CD4-positive, alpha-beta T cell (primary cell): ENCODE measurements at regions of chr15 and their contacts with region 1.

Region 1: DNA sequence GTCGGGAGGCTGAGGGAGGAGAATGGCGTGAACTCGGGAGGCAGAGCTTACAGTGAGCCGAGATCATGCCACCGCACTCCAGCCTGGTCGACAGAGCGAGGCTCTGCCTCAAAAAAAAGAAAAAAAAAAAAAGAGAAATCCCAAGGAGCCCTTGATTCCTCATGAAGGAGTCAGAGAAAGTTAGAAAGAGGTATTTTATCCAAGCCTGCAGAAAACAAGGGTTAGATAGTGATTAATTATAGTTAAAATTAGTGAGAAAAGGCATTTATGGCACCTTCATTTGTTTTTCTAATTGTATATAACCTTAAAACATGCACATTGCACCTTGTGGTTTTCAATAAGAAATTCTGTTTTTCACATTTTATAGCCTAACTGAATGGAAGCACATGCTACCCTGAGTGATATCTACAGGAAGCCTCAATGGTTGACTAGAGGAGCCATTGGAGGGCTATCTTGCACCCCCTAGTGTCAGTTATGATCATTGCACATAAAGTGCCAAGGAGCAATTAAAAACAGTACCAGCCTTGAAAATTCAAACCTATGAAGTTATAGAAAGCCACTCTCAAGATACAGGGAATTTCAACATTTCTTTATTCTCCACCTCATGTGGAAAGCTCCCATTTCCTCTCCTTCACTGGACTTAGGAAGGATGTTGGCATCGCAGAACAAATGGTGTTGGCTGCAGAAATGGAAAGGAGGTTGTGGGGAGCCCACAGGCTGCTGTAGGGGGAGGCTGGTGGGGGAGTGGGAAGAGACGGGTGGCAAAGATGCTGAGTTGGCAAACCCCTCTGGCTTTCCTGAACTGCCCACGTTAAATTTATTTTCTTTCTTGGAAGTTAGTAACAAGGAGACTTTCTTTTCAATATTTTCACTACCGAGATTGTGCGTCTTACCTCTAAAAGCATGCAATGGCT is 48.5 kb downstream of the ITGA11 start:
- DNase-seq: peak in 11 of 14 experiments; percentile 6 to 73 (median 27)
- ATAC-seq: peak; percentile 83
- H3K4me3 ChIP-seq: no peak overlapping the region
- H3K4me3 Mint-ChIP-seq: no peak overlapping the region
- H3K27ac ChIP-seq: no peak overlapping the region
- H3K27ac Mint-ChIP-seq: no peak overlapping the region
- H3K4me1 ChIP-seq: peaks cover 13% of the 10 kb centered on the region
- H3K4me1 Mint-ChIP-seq: peaks cover 21% of the 10 kb centered on the region
- H3K27me3 ChIP-seq: peaks cover 0 to 9% of the 10 kb centered on the region in 2 experiments
- H3K27me3 Mint-ChIP-seq: peaks cover 3% of the 10 kb centered on the region
- CTCF ChIP-seq: peak; percentile 70

Region 2: GRCh38 chr15:68252925-68253534 is 130.4 kb before region 1 on chr15:
- CTCF ChIA-PET with region 1: no interaction called
- POLR2A ChIA-PET with region 1: no interaction called
- intact Hi-C with region 1: loop called (anchors 1 to 2 kb)
- DNase-seq: peak in 6 of 14 experiments; percentile 16 to 76 (median 60)
- ATAC-seq: peak; percentile 75
- H3K4me3 ChIP-seq: no peak overlapping the region
- H3K4me3 Mint-ChIP-seq: peak overlapping the region; percentile 44
- H3K27ac ChIP-seq: no peak overlapping the region
- H3K27ac Mint-ChIP-seq: no peak overlapping the region
- H3K4me1 ChIP-seq: peaks cover 9% of the 10 kb centered on the region
- H3K4me1 Mint-ChIP-seq: peaks cover 7% of the 10 kb centered on the region
- H3K27me3 ChIP-seq: no peaks in the 10 kb centered on the region
- H3K27me3 Mint-ChIP-seq: no peaks in the 10 kb centered on the region
- CTCF ChIP-seq: peak; percentile 89

Region 3: DNA sequence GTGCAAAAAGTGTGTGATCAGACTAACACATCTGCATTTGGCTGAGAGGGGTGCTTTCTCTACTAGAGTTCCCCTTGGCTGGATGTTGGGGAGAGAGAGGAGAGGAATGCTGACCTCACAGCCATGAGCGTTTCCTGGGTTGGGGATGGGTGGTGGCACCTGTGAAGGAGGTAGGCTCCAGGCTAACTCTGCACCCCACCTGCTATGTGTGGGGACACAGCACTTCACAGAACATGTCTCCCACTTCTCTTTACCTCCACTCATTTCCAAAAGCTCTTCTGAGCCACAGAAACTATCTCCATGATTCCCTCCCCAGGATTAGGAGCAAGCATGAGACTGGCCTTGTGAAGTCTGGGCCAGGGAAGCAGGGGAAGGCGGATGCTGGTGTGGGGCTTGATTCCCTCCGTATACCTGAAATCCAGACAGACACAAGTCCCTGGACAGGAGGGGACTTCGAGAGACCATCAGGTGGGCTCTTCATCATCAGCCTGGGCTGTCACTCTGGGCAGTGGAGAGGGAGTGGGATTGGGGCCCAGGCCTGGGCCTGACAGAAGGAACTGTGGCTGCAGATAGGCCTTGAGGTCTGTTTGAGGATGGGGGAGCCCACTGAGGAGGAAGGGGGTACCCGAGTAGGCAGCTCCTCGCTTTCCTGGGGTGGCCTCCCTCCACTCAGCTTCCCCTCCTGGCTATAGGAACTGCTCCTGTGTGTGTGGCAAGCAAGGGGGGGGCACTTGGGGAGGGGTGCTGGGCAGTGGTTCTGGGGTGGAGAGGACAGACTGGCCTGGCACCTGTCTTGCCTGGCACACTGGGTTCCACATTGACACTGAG is 65.2 kb before region 1 on chr15:
- CTCF ChIA-PET with region 1: no interaction called
- POLR2A ChIA-PET with region 1: no interaction called
- intact Hi-C with region 1: no loop called
- DNase-seq: no peak
- ATAC-seq: no peak
- H3K4me3 ChIP-seq: no peak overlapping the region
- H3K4me3 Mint-ChIP-seq: no peak overlapping the region
- H3K27ac ChIP-seq: no peak overlapping the region
- H3K27ac Mint-ChIP-seq: no peak overlapping the region
- H3K4me1 ChIP-seq: no peaks in the 10 kb centered on the region
- H3K4me1 Mint-ChIP-seq: peaks cover 19% of the 10 kb centered on the region
- H3K27me3 ChIP-seq: no peaks in the 10 kb centered on the region
- H3K27me3 Mint-ChIP-seq: no peaks in the 10 kb centered on the region
- CTCF ChIP-seq: no peak

Region 4: DNA sequence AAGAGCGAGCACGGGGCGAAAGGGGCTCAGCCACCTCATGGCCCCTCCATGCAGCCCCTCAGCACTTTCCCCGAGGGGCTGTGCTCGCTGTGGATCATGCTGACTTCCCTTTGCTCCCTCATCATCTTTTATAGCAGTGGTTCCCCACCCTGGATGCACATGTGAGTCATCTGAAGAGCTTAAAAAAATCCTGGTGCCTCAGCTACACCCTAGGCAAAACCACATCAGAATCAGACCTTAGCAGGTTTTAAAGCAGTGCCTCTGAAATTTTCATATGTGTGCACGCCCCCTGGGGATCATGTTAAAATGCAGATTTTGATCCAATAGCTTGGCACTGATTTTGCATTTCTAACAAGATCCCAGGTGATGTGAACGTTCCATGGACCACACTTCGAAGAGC is 55.0 kb before region 1 on chr15:
- CTCF ChIA-PET with region 1: no interaction called
- POLR2A ChIA-PET with region 1: no interaction called
- intact Hi-C with region 1: loop called in 1 of 2 experiments (anchors 5 kb)
- DNase-seq: peak in 7 of 14 experiments; percentile 6 to 19 (median 16)
- ATAC-seq: peak; percentile 92
- H3K4me3 ChIP-seq: no peak overlapping the region
- H3K4me3 Mint-ChIP-seq: peak overlapping the region; percentile 5
- H3K27ac ChIP-seq: no peak overlapping the region
- H3K27ac Mint-ChIP-seq: peak overlapping the region; percentile 82
- H3K4me1 ChIP-seq: peaks cover 15% of the 10 kb centered on the region
- H3K4me1 Mint-ChIP-seq: peaks cover 53% of the 10 kb centered on the region
- H3K27me3 ChIP-seq: no peaks in the 10 kb centered on the region
- H3K27me3 Mint-ChIP-seq: peaks cover 5% of the 10 kb centered on the region
- CTCF ChIP-seq: peak; percentile 34